Lower leg skin (tissue), 4 donors: ENCODE measurements at regions of chr6 and their contacts with region 1.

Region 1: DNA sequence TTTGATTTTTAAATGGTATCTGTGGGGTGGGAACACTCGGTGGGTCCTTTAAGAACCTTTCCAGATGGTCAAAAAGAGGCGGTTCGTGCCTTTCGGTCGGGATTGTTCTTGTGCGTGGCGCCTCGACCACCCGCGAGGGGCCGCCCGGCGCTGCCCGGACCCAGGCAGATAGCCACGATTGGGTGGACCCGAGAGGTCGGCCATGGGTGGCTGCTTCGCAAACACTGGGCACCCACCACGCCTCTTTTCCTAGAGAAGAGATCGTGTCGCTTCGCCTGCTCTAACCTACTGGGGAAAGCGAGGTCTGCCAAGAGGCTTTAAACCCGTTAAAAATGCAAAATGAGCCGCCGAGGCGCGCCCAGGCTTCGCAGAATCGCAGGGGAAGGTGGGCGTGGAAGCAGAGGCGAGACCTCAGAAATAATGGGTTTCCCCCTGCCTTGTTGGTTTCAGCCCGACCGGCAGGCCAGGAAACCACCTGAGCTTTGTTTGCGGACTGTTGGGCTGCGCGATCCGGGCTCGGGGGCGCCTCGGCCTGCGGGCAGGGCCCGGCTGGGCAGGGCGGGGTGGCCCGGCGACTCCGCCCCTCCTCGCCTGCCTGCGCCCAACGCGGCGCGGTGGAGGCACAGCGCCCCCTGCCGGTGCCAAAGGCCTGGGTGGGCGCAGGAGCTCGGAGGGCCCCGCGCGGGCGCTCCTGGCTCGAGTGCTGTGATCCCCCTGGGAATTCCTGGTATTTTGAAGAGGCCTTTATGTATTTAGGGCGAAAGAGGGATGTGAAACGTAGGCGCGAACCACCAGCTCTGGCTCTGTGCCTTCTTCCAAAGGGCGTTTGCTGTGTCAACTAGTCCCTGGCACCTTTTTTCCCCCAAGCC is 1.6 kb downstream of the MARCKS start:
- DNase-seq: peak; percentile 71 to 95
- H3K4me3 ChIP-seq: peak overlapping the region; percentile 78
- CTCF ChIP-seq: peak in 2 of 3 donors; percentile 28 to 77
- POLR2A ChIP-seq: no peak

Region 2: DNA sequence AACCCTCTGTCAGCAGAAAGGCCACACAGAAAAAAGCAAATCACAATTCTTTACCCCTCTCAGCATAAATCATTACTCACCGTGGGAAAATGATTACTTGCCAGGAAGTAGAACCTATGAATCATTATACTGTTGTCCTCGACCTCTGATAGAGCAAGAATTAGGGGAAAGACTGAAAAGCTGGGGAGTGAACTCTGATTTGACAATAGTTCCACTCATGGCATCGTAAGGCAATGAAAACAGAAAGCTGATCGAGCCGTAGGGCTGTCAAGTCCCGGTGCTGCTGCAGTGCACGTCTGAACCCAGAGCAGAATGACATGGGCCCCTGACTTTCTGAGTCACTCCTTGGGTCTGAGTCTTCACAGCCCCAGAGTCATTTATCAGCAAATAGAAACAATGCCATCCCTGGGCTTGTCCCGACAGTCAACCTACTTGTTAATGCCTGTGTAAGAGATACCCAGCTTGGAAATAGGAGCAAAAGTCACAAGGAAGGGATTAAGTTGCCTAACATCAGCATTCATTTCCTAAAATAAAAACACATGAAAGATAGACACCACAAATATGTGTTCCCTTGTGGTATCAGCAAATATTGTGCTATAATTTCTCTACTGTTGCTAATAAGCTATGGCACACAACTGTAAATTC is 226.4 kb before region 1 on chr6:
- intact Hi-C with region 1: loop called (anchors 10 kb)
- DNase-seq: peak; percentile 83 to 87
- H3K4me3 ChIP-seq: no peak overlapping the region
- CTCF ChIP-seq: no peak
- POLR2A ChIP-seq: no peak

Region 3: DNA sequence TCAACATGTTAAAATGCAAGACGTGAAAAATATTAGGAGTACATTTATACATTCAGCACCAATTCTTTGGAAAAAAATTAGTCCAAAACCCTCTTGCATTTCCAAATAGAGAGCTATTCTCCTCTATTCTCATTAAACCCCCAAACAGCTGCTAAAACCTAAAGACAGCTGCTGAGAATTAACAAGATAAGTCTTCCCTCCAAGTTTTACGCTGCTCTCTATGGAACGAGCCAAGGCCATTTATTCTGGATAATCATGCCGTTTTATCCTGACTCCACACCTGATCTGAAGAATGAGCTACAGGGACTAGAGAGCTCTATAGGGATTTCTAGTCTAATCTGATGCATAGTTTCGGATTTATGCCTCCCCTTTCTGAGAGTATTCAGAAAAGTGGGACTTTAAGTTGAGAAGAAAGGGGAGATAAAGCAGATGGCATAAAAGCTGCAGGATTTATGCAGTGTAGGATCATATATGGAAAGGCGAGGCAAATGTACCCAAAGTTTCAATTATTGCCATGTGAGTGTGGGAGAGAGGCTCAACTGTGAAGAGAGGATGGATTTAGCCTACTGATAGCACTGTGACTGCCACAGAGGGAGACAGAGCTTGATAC is 548.8 kb after region 1 on chr6:
- intact Hi-C with region 1: no loop called
- DNase-seq: no peak
- H3K4me3 ChIP-seq: no peak overlapping the region
- CTCF ChIP-seq: no peak
- POLR2A ChIP-seq: no peak